AG04450 (cell line): ENCODE measurements at regions of chr7 and their contacts with region 1.

Region 1: GRCh38 chr7:30983042-30983913 is 19.5 kb downstream of the GHRHR start:
- DNase-seq: peak; percentile 53
- H3K4me3 ChIP-seq: no peak overlapping the region
- H3K27ac ChIP-seq: no peak overlapping the region
- H3K27me3 ChIP-seq: peaks cover 21% of the 10 kb centered on the region
- CTCF ChIP-seq: peak; percentile 91

Region 2: GRCh38 chr7:30800785-30801252 is 182.5 kb before region 1 on chr7:
- CTCF ChIA-PET with region 1: interaction called, 29 read pairs
- POLR2A ChIA-PET with region 1: no interaction called
- DNase-seq: peak; percentile 63
- H3K4me3 ChIP-seq: no peak overlapping the region
- H3K27ac ChIP-seq: no peak overlapping the region
- H3K27me3 ChIP-seq: no peaks in the 10 kb centered on the region
- CTCF ChIP-seq: peak; percentile 79

Region 3: DNA sequence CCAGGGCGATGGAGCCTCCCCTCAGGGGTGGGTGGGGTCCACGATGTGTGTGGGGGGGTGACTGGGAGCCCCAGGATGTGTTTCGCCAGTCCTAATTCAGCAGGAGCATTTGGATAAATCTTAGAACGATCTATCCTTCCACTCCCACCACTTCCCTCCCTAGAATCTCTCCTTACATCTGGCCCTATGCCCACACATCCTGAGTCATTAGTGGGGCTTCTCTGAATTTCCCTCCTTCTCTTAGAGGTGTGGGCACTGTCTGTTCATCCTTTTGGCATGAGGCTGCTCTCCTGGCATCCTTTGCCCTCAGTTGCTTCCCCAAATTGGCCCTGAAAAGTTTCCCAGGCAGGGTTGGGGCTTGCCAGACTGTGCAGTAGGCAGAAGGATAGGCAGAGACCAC is 17.9 kb before region 1 on chr7:
- CTCF ChIA-PET with region 1: interaction called, 20 read pairs
- POLR2A ChIA-PET with region 1: no interaction called
- DNase-seq: no peak
- H3K4me3 ChIP-seq: no peak overlapping the region
- H3K27ac ChIP-seq: no peak overlapping the region
- H3K27me3 ChIP-seq: peaks cover 8% of the 10 kb centered on the region
- CTCF ChIP-seq: no peak

Region 4: GRCh38 chr7:31002256-31002655 is 19.0 kb after region 1 on chr7:
- CTCF ChIA-PET with region 1: interaction called, 11 read pairs
- POLR2A ChIA-PET with region 1: no interaction called
- DNase-seq: no peak
- H3K4me3 ChIP-seq: no peak overlapping the region
- H3K27ac ChIP-seq: no peak overlapping the region
- H3K27me3 ChIP-seq: peaks cover 9% of the 10 kb centered on the region
- CTCF ChIP-seq: no peak

Region 5: GRCh38 chr7:31129067-31129466 is 145.8 kb after region 1 on chr7:
- CTCF ChIA-PET with region 1: interaction called, 338 read pairs
- POLR2A ChIA-PET with region 1: no interaction called
- DNase-seq: no peak
- H3K4me3 ChIP-seq: no peak overlapping the region
- H3K27ac ChIP-seq: no peak overlapping the region
- H3K27me3 ChIP-seq: no peaks in the 10 kb centered on the region
- CTCF ChIP-seq: no peak